ENCODE measurements at regions of chr17 and their contacts with region 1.

Region 1: GRCh38 chr17:12620200-12620720 is 45.4 kb upstream of the MYOCD start:
- DNase-seq: no peak
- ATAC-seq: no peak
- H3K4me3 ChIP-seq: no peak overlapping the region
- H3K27ac ChIP-seq: no peak overlapping the region
- H3K4me1 ChIP-seq: no peaks in the 10 kb centered on the region
- H3K27me3 ChIP-seq: no peaks in the 10 kb centered on the region; a peak in 1 of 5 replicates
- CTCF ChIP-seq: no peak
- EP300 ChIP-seq: no peak
- POLR2A ChIP-seq: no peak
- RAD21 ChIP-seq: no peak

Region 2: GRCh38 chr17:12522743-12523183 is 97.5 kb before region 1 on chr17:
- CTCF ChIA-PET with region 1: no interaction called
- POLR2A ChIA-PET with region 1: no interaction called
- in situ Hi-C with region 1: loop called (anchors 25 kb)
- intact Hi-C with region 1: no loop called
- DNase-seq: peak; percentile 29
- ATAC-seq: no peak
- H3K4me3 ChIP-seq: no peak overlapping the region
- H3K27ac ChIP-seq: no peak overlapping the region
- H3K4me1 ChIP-seq: peaks cover 9% of the 10 kb centered on the region
- H3K27me3 ChIP-seq: no peaks in the 10 kb centered on the region; a peak in 1 of 5 replicates
- CTCF ChIP-seq: no peak
- EP300 ChIP-seq: no peak
- POLR2A ChIP-seq: no peak
- RAD21 ChIP-seq: no peak

Region 3: GRCh38 chr17:12680407-12680897 is 60.2 kb after region 1 on chr17:
- CTCF ChIA-PET with region 1: no interaction called
- POLR2A ChIA-PET with region 1: no interaction called
- in situ Hi-C with region 1: no loop called
- intact Hi-C with region 1: no loop called
- DNase-seq: no peak
- ATAC-seq: no peak
- H3K4me3 ChIP-seq: no peak overlapping the region
- H3K27ac ChIP-seq: no peak overlapping the region
- H3K4me1 ChIP-seq: no peaks in the 10 kb centered on the region
- H3K27me3 ChIP-seq: peaks cover 0 to 7% of the 10 kb centered on the region in 2 experiments; a peak in 3 of 5 replicates
- CTCF ChIP-seq: no peak
- EP300 ChIP-seq: no peak
- POLR2A ChIP-seq: no peak
- RAD21 ChIP-seq: no peak